GM10248 (cell line): ENCODE measurements at regions of chr5 and their contacts with region 1.

Region 1: GRCh38 chr5:54959673-54960418 is 25.5 kb downstream of the ESM1 start:
- DNase-seq: no peak
- CTCF ChIP-seq: no peak

Region 2: DNA sequence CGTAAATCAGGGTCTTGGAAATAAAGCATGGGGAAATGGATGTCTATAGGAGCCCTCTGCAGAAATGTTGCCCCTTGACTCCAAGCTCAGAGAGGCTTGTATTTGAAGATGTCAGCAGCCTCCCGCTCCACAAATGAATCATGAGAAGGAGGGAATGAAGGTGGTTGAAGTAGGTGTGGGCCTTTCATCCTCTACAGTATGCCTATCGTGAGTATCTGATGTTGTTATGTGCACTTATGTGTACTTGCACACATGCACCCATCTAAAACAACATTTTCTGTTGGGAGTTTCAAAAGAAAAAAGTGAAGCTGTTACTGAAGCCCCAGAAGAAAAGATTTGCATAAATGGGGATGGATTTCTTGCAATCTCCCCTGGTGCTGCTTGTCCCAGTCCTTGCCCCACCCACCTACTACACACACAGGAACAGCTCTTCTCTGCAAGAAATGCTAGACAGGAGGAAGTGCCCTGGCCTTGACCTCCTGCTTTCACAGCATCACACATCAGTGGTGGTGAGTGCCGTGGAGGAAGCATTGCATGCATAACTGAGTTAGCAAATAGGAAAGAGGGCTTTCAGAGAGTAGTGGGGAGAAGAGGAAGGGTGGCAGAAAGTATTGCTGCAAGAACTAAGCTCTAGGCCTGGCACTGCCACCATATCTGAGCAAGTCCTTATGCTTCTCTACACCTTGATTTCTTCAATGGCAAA is 286.2 kb before region 1 on chr5:
- CTCF ChIA-PET with region 1: no interaction called
- POLR2A ChIA-PET with region 1: no interaction called
- DNase-seq: no peak
- CTCF ChIP-seq: no peak

Region 3: GRCh38 chr5:54944364-54944763 is 15.5 kb before region 1 on chr5:
- CTCF ChIA-PET with region 1: interaction called, 20 read pairs
- POLR2A ChIA-PET with region 1: no interaction called
- DNase-seq: peak; percentile 26
- CTCF ChIP-seq: peak; percentile 27

Region 4: DNA sequence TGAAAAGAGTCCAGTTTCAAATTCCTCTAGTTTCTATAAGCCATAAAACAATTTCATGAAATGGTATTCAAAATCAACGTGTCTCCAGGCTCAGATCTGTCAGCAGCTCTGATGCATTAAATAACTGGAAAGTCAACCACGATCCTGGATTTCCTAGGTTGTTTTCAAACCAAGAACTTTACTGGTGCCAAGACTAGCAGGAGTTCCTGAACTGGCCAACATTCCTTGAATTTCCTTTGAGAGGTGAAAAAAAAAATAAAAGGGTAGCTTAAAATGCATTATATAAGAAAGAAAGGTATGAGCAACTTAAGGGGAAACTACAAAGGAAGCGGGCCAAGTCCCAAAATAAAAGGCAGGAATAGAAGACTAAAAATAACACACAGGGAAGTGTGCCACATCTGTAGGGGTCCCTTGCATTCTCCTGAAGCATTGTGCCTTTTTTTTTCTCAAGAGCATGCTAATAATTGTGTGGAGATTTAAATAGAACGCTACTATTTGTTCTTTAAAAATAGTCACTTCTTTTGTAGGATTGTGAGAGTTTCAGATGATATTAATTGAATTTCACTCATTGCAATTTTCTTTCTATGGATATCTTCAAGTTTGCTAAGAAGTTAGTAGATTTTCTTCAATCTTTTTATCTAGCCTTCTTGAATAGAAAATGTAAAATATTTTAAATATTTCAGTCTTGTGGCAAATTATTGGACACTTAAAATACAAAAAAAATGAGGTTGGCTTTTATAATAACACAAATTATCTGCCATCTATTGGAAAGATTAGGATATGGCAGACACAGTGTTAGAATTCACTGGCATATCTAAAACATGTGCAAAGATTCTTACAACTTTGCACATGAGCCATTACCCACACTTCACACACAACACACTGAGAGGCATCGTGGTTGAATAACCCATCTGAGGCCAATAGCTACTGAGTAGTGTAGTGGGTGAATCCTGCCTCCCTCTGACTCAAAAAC is 10.3 kb after region 1 on chr5:
- CTCF ChIA-PET with region 1: interaction called, 12 read pairs
- POLR2A ChIA-PET with region 1: no interaction called
- DNase-seq: no peak
- CTCF ChIP-seq: no peak

Region 5: GRCh38 chr5:55037046-55037771 is 77.4 kb after region 1 on chr5:
- CTCF ChIA-PET with region 1: no interaction called
- POLR2A ChIA-PET with region 1: no interaction called
- DNase-seq: no peak
- CTCF ChIP-seq: no peak